AG04449 (cell line): ENCODE measurements at regions of chr5 and their contacts with region 1.

Region 1: DNA sequence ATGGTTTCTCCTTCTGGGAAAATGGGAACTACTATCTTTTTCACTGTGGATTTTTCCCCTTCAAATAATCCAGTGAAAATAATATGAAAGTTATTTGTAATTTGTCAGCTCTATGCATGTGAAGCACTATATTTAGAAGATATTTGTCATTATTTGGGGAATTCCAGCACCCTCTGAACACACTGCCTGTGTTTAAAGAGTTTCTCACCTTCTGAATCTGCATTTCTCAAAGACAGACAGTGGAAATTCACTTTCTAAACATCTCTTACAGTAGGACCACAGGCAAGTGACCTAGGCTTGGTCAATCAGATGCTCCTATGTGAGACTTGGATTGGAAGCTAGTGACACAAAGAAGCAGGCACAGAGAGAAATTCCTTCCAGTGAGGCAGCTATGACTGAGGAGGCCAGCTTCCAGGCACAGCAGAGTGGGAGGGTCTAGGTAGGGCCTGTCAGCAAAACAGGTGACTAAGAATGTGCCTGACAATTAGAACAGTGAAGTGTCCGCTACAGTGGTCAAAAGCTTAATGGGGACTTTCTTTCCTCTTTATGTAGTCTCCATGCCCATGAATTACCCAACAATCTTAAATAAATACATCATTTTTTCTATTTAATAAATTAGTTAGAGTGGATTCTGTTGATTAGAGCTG is 167.2 kb downstream of the HMHB1 start:
- DNase-seq: no peak
- H3K4me3 ChIP-seq: no peak overlapping the region
- CTCF ChIP-seq: no peak

Region 2: DNA sequence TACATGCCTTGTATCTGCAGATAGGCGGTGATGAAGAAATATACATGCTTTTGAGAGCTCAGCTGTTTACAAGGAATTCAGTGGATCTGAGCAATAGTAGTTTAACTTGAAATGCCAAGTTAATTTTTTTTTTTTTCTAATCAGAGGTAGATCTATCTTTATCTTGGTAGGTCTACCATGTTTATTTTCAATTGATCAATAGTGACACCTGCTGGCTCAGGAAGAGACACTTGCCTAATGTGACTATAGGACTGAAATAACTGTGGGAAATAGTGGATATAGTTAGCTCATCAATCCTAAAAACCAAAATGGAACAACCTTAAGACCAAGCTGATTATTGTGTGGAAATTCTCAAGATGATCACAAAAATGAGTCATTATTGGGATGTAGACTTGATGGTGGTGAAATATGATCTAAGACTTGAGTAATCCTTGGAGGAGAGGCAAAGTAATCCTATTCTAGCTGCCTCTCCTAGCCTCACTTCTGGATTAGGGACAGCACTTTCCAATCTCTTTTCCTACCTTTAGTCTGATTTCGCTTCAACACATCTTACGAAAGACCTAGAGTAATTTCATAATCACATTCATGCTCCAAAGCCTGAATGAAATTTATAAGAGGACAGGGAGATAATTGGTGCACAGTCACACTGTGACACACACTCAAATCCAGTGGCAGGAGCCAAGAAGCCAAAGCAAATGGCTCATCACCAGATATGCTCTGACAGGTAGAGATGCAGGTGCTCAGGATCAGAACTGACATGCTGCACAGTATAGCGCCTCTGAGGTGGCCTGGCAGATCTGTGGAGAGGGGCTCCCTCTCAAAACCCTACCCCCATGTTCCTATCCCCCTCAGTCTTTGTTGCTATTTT is 10.9 kb before region 1 on chr5:
- CTCF ChIA-PET with region 1: interaction called, 27 read pairs
- POLR2A ChIA-PET with region 1: no interaction called
- DNase-seq: no peak
- H3K4me3 ChIP-seq: no peak overlapping the region
- CTCF ChIP-seq: peak; percentile 38